ENCODE measurements at regions of chr16 and their contacts with region 1.

Region 1: GRCh38 chr16:85821441-85822135 is 22.1 kb downstream of the COX4I1 start:
- DNase-seq: peak; percentile 59 to 84 (median 79)
- ATAC-seq: peak; percentile 84 to 90
- H3K4me3 Mint-ChIP-seq: no peak overlapping the region
- H3K27ac Mint-ChIP-seq: no peak overlapping the region
- H3K4me1 Mint-ChIP-seq: peaks cover 2 to 17% (median 12%) of the 10 kb centered on the region in 4 donors
- H3K27me3 Mint-ChIP-seq: peaks cover 0 to 8% (median 2%) of the 10 kb centered on the region in 5 donors

Region 2: DNA sequence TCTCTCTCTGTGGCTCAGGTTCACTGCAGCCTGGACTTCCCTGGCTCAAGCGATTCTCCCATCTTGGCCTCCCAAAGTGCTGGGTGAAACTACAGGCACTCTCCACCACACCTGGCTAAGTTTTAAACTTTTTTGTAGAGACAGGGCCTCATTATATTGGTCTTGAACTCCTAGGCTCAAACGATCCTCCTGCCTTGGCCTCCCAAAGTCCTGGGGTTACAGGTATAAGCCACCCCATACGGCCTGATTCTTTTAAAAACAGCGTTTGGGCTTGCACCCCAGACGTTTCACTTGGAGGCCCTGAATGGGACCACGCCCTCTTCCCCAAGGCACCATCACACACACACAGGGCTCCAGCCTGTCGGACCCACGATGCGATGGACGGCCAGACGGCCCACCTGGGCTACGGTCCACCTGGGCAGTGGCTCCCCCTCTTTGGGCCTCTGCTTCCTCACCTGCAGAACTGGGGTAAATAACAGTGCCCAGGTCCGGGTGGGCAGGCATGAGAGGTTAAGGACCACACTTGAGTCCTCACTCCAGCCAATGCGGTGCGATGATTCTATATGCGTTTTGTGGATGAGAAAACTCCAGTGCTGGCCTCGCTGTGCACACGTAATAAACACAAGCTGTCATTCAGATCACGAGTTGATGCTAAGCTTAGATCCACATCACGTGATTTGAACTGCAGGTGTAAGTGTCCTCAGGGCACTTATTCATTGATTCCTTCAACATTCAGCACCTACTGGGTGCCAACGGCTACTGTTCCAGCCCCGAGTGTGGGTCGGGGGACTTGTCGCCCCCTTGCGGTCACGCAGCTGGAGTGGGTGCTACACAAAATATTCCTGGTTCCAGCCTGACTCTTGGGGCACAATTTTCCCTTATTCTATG is 103.2 kb before region 1 on chr16:
- POLR2A ChIA-PET with region 1: no interaction called
- DNase-seq: no peak
- ATAC-seq: no peak
- H3K4me3 Mint-ChIP-seq: no peak overlapping the region
- H3K27ac Mint-ChIP-seq: peak overlapping the region in 1 of 10 donors; percentile 28
- H3K4me1 Mint-ChIP-seq: peaks cover 3 to 23% (median 18%) of the 10 kb centered on the region in 4 donors
- H3K27me3 Mint-ChIP-seq: peaks cover 0 to 9% (median 0%) of the 10 kb centered on the region in 5 donors

Region 3: DNA sequence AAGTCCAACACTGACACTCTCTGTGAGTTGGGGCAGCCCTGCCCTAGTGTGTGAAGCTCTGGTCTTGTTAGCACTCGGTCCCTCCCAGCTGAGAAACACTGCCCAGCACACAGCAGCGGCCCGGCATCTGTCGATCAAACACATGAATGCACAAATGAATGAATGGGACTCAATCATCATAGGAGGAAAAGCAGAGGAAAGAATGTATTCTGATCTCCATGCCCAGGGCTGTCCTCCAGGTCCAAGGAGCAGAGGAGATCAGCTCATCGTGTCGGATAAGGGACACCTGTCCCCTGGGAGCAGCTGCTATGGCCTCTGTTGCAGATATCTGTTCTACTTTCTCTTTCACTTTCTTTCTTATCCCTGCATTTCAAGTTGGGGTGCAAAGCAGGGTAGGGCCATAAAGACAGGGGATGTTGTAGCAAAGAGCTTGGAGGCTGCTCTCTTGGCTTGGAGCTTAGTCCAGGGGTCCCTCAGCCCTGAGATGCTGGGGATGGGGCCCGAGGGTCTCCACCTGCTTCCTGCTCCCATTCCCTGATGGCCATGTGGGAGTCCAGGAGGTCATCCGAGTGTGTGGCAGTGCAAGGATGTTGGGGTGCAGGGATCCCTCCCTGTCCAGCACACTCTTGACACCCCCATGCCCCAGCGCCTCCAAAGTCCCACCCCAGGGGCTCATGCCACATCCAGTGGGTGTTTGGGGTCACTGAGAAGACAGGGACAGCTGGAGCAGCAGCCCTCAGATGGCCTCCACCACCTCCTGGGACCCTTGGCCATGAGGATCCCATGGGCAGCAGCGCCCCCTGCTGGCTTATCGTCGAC is 165.6 kb after region 1 on chr16:
- POLR2A ChIA-PET with region 1: interaction called, 11 read pairs
- DNase-seq: peak in 8 of 10 donors; percentile 7 to 54 (median 32)
- ATAC-seq: peak in 1 of 2 donors; percentile 46
- H3K4me3 Mint-ChIP-seq: no peak overlapping the region
- H3K27ac Mint-ChIP-seq: peak overlapping the region in 1 of 10 donors; percentile 34
- H3K4me1 Mint-ChIP-seq: peaks cover 0 to 78% (median 5%) of the 10 kb centered on the region in 4 donors
- H3K27me3 Mint-ChIP-seq: peaks cover 3 to 38% (median 11%) of the 10 kb centered on the region in 5 donors